ENCODE measurements at regions of chr1 and their contacts with region 1.

Region 1: DNA sequence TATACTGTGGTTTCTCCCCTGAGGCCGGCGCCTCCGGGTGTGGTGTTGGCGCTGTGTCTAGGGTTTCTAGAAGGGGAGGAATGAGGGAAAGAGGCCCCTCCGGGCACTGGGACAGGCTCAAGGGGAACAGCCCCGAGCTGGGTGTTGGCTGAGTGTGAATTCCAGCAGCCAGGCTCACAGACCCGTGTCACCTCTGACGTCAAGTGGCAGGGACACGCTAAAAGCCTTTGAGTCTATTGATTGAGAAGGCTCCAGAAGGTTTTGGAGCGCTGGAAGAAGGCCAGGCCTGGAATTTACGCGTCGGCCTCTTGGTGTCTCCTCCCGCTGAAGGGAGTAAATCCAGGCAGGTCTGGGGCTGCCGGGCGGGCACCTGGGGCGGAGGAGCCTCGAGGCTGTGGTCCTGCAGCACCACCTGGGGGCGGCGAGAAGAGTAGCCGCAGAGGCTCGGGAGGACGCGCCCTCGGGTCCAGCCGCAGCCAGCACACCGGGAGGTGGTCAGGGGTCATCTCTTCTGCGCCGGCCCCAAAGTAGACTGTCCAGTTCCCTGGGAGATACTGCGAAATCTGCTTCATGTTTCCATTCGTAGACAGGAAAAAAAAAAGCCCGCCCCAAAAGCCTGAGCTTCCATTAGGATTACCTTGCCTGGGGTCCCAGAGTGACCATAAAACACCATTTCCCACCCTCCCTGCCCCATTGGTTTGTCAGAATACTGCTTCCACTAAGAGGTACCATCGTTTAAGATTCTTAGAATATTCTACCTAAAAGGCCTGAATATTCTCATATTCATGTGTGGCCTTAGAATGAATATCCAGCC is 61.7 kb downstream of the TLR5 start:
- DNase-seq: peak; percentile 37 to 55 (median 39)
- H3K4me3 ChIP-seq: peak overlapping the region; percentile 3 to 66 (median 32)
- H3K4me3 Mint-ChIP-seq: peak overlapping the region; percentile 68 to 77
- H3K27ac ChIP-seq: no peak overlapping the region
- H3K27ac Mint-ChIP-seq: peak overlapping the region in 1 of 7 donors; percentile 40
- H3K4me1 ChIP-seq: peaks cover 3 to 6% of the 10 kb centered on the region in 2 donors
- H3K4me1 Mint-ChIP-seq: peaks cover 3% of the 10 kb centered on the region
- H3K27me3 ChIP-seq: no peaks in the 10 kb centered on the region
- H3K27me3 Mint-ChIP-seq: peaks cover 3 to 10% (median 3%) of the 10 kb centered on the region in 3 donors
- CTCF ChIP-seq: peak; percentile 83

Region 2: GRCh38 chr1:222732216-222733159 is 348.9 kb before region 1 on chr1:
- intact Hi-C with region 1: loop called in 1 of 2 experiments (anchors 10 kb)
- DNase-seq: peak in 1 of 3 donors; percentile 5
- H3K4me3 ChIP-seq: no peak overlapping the region
- H3K4me3 Mint-ChIP-seq: no peak overlapping the region
- H3K27ac ChIP-seq: peak overlapping the region in 1 of 2 donors; percentile 25
- H3K27ac Mint-ChIP-seq: peak overlapping the region in 3 of 7 donors; percentile 28 to 42 (median 39)
- H3K4me1 ChIP-seq: peaks cover 0 to 2% of the 10 kb centered on the region in 2 donors
- H3K4me1 Mint-ChIP-seq: peaks cover 16% of the 10 kb centered on the region
- H3K27me3 ChIP-seq: no peaks in the 10 kb centered on the region
- H3K27me3 Mint-ChIP-seq: no peaks in the 10 kb centered on the region
- CTCF ChIP-seq: no peak

Region 3: DNA sequence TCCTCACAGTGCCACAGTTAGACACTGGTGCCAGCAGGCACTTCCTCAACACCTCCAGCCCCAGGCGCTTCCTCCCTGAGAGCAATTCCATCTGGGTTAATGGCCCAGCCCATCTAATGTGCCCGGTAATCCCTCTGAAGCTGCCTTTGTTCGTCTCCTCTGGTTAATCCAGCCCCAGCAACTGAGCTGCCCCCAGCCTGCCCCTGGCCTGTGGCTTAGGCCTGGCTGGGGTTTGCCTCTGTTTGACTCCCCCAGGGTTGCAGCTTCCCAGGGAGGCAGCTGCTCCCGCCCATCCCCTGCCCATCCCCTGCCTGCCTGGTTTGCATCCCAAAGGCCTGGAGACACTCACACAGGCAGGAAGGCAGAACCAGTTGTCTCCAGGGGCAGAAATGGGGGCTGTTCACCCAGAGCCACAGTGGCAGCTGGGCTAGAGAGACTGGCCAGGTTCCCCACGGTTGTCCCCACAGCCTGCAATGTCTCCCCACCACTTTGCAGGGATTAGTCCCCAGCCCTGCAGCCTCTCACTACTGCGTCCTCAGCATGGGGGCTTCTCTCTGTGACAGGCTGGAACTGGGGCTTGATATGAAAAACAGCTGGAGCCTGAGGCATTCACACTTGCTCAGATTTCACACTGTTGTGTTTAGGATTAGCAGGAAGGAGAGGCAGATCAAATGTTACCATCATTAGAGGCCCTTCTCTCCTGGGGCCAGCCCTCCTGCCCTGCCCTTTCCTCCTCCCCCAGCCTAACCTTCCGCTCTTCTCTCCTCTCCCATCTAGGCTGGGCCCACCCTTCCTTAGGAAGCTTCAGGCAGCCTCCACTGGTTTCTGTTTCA is 58.5 kb before region 1 on chr1:
- intact Hi-C with region 1: no loop called
- DNase-seq: no peak
- H3K4me3 ChIP-seq: no peak overlapping the region
- H3K4me3 Mint-ChIP-seq: no peak overlapping the region
- H3K27ac ChIP-seq: no peak overlapping the region
- H3K27ac Mint-ChIP-seq: no peak overlapping the region
- H3K4me1 ChIP-seq: no peaks in the 10 kb centered on the region
- H3K4me1 Mint-ChIP-seq: peaks cover 4% of the 10 kb centered on the region
- H3K27me3 ChIP-seq: no peaks in the 10 kb centered on the region
- H3K27me3 Mint-ChIP-seq: peaks cover 2 to 5% (median 2%) of the 10 kb centered on the region in 3 donors
- CTCF ChIP-seq: no peak

Measured in CD14-positive monocyte (primary cell).